GM10248 (cell line): ENCODE measurements at regions of chr6 and their contacts with region 1.

Region 1: GRCh38 chr6:131694831-131695426 is 6.3 kb downstream of the OR2A4 start:
- DNase-seq: peak; percentile 62
- CTCF ChIP-seq: peak; percentile 50

Region 2: GRCh38 chr6:131909408-131910218 is 214.7 kb after region 1 on chr6:
- CTCF ChIA-PET with region 1: interaction called, 20 read pairs
- POLR2A ChIA-PET with region 1: no interaction called
- DNase-seq: peak; percentile 55
- CTCF ChIP-seq: peak; percentile 84